Activated CD4-positive, alpha-beta T cell treated with anti-CD3 and anti-CD28 coated beads, Interleukin-2, amount 10 ng/mL, durations not matched to agents 7 days and 5 days (primary cell): ENCODE measurements at regions of chr16 and their contacts with region 1.

Region 1: DNA sequence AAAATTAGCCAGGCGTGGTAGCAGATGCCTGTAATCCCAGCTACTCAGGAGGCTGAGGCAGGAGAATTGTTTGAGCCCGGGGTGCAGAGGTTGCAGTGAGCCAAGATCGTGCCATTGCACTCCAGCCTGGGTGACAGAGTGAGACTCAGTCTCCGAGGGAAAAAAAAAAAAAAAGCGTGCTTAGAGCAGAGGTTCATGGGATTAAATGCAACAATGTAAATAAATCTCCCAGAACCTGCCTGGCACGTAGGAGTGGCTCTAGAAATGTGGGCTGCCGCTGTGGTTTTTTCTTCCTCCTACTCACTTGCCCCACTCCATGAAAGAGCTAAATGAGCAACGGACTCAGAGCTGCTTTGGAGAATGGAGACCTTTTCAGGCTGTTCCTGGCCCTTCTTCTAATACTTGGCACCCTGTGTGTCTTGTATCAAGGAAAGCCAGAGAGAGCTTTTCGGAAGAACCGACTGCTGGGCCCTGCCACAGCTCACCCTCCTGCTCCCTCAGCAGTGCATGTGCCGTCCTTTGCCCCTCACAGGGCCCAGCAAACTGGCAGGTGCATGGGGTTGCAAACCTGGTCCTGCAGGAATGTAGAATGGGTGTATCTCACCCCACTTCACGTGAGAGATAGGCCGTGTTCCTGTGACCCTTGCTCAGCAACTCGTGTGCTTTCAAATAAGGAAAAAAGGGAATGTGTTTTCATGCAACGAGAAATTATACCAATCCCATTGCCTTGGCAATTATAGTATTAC is 52.0 kb downstream of the LDHD start:
- DNase-seq: peak; percentile 31
- H3K4me3 Mint-ChIP-seq: peak overlapping the region; percentile 58
- H3K27ac Mint-ChIP-seq: peak overlapping the region; percentile 85
- H3K4me1 Mint-ChIP-seq: peaks cover 64% of the 10 kb centered on the region
- H3K27me3 Mint-ChIP-seq: no peaks in the 10 kb centered on the region

Region 2: DNA sequence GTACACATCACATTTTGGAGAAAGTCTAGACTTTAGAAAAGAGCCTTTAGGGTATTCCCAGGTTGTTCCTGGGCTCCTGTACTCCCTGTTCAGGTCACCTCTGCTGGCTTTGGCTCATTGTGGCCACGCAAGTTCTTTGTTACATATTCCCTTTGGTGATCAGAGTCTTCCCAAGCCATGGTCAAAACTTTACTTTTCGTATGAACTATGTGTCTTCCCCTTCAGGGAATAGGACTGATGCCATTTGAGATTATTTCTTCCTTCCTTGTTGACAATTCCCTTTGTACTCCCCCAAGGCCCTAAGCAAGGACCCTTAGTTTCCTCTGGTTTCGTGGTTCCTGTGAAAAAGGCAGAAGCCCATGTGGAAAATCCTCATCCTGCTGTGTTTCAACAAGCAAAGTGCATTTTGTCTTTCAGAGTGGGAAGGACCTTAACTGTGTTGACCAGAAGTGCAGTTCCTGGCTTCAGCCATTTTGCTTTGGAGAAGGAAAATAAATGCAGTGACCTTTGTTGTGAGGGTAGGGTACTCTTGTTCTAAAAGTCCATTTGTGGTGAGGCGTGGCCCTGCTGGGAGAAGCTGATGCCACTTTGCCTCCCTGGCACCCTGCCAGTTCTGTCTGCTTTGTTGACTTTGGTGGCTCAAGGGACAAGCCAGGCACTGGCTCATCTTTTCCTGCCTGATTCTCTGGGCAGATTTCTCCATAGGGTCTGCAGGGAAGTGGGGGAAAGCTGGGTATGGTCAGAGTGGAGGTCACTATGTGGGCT is 10.6 kb before region 1 on chr16:
- CTCF ChIA-PET with region 1: interaction called, 10 read pairs
- POLR2A ChIA-PET with region 1: no interaction called
- DNase-seq: no peak
- H3K4me3 Mint-ChIP-seq: no peak overlapping the region
- H3K27ac Mint-ChIP-seq: no peak overlapping the region
- H3K4me1 Mint-ChIP-seq: peaks cover 6% of the 10 kb centered on the region
- H3K27me3 Mint-ChIP-seq: no peaks in the 10 kb centered on the region

Region 3: GRCh38 chr16:75074920-75075687 is 10.5 kb after region 1 on chr16:
- CTCF ChIA-PET with region 1: interaction called, 11 read pairs
- POLR2A ChIA-PET with region 1: no interaction called
- DNase-seq: peak; percentile 89
- H3K4me3 Mint-ChIP-seq: peak overlapping the region; percentile 35
- H3K27ac Mint-ChIP-seq: peak overlapping the region; percentile 87
- H3K4me1 Mint-ChIP-seq: peaks cover 63% of the 10 kb centered on the region
- H3K27me3 Mint-ChIP-seq: no peaks in the 10 kb centered on the region

Region 4: DNA sequence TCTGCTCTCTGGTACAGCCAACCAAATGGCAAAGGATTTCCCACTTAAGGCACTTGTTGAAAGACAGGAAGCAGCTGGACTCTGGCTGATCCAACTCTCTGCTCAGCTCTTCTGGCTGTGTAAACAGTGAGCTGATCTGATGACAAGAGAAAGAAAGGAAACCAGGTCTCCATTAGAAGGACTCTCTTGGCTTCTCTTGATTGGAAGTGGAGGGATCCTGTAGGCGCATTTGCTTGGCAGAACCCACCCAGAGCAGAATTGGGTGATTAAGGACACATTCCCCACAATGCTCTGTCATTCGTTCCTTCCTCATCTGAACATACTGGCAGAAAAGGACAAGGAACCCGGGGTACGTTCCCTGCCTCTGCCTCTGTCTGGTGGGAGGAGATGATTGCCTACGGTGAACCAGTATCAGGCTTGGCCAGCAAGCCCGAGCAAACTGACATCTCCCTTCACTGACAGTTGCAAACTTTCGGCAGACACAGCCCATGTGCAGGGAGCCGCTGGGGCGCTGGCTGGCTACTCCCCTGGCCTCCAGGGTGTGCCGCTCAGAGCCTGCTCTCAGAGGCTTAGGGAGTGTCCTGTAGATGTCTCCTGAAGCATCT is 22.9 kb after region 1 on chr16:
- CTCF ChIA-PET with region 1: interaction called, 3 read pairs
- POLR2A ChIA-PET with region 1: interaction called, 12 read pairs
- DNase-seq: no peak
- H3K4me3 Mint-ChIP-seq: no peak overlapping the region
- H3K27ac Mint-ChIP-seq: no peak overlapping the region
- H3K4me1 Mint-ChIP-seq: peaks cover 24% of the 10 kb centered on the region
- H3K27me3 Mint-ChIP-seq: no peaks in the 10 kb centered on the region